ENCODE measurements at regions of chr1 and their contacts with region 1.

Region 1: GRCh38 chr1:29235955-29236684 is at the start of gene PTPRU:
- DNase-seq: peak; percentile 75
- H3K4me3 Mint-ChIP-seq: peak within 1 kb of the TSS; percentile 73
- H3K27ac Mint-ChIP-seq: peak within 1 kb of the TSS; percentile 16
- H3K4me1 Mint-ChIP-seq: peaks cover 17% of the 10 kb centered on the region
- H3K27me3 Mint-ChIP-seq: peaks cover 51% of the 10 kb centered on the region
- total RNA-seq, gene PTPRU: 0.67 and 0.76 TPM in 2 replicates

Region 2: GRCh38 chr1:29793101-29793546 is 557.0 kb after region 1 on chr1:
- intact Hi-C with region 1: loop called (anchors 5 kb)
- DNase-seq: peak; percentile 61
- H3K4me3 Mint-ChIP-seq: no peak overlapping the region
- H3K27ac Mint-ChIP-seq: no peak overlapping the region
- H3K4me1 Mint-ChIP-seq: no peaks in the 10 kb centered on the region
- H3K27me3 Mint-ChIP-seq: peaks cover 1% of the 10 kb centered on the region

Region 3: GRCh38 chr1:30085811-30086770 is 850.0 kb after region 1 on chr1:
- intact Hi-C with region 1: loop called (anchors 2 kb)
- DNase-seq: peak; percentile 5
- H3K4me3 Mint-ChIP-seq: no peak overlapping the region
- H3K27ac Mint-ChIP-seq: no peak overlapping the region
- H3K4me1 Mint-ChIP-seq: no peaks in the 10 kb centered on the region
- H3K27me3 Mint-ChIP-seq: peaks cover 9% of the 10 kb centered on the region

Region 4: DNA sequence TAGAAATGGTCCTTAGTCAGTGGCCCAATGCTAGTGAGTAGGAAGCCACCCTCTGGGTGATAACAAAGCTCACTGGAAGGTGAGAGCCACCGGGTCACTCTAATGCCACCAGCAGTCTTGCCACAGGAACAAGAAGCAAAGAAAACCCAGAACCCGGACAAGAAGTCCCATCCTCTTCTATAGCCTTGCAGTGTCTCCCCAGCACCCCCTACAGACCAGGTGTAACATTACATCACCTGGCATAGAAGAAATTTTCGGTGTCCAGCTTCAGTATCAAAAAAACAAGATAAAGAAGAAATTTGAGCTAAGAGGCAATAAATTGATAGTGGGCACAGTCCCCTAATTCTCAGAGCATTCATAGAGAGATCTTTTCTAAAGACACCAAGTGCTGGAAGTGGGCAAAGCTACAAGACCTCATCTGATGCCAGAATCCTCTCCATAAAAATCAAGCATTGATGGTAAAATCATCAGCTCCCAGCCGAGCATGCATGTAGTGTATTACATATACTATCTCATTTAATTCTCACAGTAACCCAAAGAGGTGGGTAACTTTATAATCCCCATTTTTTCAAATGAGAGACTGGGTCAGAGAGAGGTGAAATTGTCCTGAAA is 996.3 kb after region 1 on chr1:
- intact Hi-C with region 1: loop called (anchors 2 kb)
- DNase-seq: peak; percentile 6
- H3K4me3 Mint-ChIP-seq: no peak overlapping the region
- H3K27ac Mint-ChIP-seq: no peak overlapping the region
- H3K4me1 Mint-ChIP-seq: no peaks in the 10 kb centered on the region
- H3K27me3 Mint-ChIP-seq: peaks cover 5% of the 10 kb centered on the region

Region 5: DNA sequence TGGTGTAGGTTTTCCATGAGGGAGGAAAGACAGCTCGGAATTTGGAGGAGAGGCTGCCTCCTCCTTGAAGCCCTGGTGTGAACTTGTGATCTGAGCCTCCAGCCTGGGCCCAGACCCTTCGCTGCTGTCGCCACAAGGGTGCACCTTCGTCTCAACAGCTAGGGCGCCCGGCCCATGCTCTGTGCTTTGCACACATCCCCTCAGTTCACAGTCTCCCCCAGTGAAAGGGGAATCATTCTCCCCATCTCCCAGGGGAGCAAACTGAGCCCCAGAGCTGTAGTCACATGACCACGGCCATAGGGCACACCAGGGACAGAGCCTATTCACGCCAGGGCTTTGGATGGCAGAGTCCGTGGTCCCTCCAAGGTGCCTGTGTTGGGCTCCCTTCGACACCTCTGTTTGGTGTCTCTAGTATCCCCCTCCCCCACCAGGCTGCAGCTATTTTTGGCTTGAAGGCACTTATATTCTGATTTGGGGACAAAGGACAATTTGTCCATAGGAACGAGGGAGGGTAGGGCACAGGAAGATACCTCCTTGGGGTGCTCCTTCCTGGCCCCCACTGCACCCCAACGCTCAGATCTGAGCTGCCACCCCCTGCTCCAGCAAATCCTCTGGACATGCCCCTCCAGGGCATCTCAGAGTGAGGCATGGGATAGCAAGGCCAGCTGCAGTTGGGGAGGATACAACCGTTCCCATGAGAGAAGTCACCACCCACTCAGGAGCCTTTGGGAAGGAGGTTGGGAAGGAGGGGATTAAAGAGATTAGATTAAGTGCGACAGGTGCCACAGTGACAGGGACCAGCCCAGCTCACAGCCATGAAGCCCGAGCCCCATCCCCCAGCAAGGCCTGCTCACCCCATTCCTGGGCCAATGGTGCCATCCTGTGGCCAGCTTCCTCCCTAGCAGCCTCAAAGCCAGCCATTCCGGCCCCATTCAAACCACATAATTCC is 1471.6 kb after region 1 on chr1:
- intact Hi-C with region 1: loop called (anchors 1 kb)
- DNase-seq: peak; percentile 32
- H3K4me3 Mint-ChIP-seq: no peak overlapping the region
- H3K27ac Mint-ChIP-seq: no peak overlapping the region
- H3K4me1 Mint-ChIP-seq: no peaks in the 10 kb centered on the region
- H3K27me3 Mint-ChIP-seq: peaks cover 7% of the 10 kb centered on the region

Measured in activated T-helper 1 cell treated with anti-CD3 and anti-CD28 coated beads, Interleukin-12 subunit alpha, Interleukin-12 subunit beta, Interleukin-2, Interleukin-4 antibody, amounts not matched to agents 30 ng/mL and 10 ng/mL and 1 ng/mL, durations not matched to agents 14 hours and 24 hours and 36 hours (primary cell).